Activated CD4-positive, alpha-beta T cell treated with anti-CD3 and anti-CD28 coated beads for 36 hours (primary cell): ENCODE measurements at regions of chr9 and their contacts with region 1.

Region 1: GRCh38 chr9:75200892-75201470 is 112.7 kb downstream of the OSTF1 start:
- DNase-seq: no peak
- ATAC-seq: no peak
- H3K4me3 Mint-ChIP-seq: no peak overlapping the region
- H3K27ac Mint-ChIP-seq: no peak overlapping the region
- H3K4me1 Mint-ChIP-seq: peaks cover 5% of the 10 kb centered on the region
- H3K27me3 Mint-ChIP-seq: no peaks in the 10 kb centered on the region

Region 2: GRCh38 chr9:75185585-75186170 is 15.3 kb before region 1 on chr9:
- CTCF ChIA-PET with region 1: interaction called, 20 read pairs
- POLR2A ChIA-PET with region 1: no interaction called
- intact Hi-C with region 1: no loop called
- DNase-seq: peak; percentile 79
- ATAC-seq: peak; percentile 72
- H3K4me3 Mint-ChIP-seq: no peak overlapping the region
- H3K27ac Mint-ChIP-seq: no peak overlapping the region
- H3K4me1 Mint-ChIP-seq: peaks cover 19% of the 10 kb centered on the region
- H3K27me3 Mint-ChIP-seq: no peaks in the 10 kb centered on the region

Region 3: DNA sequence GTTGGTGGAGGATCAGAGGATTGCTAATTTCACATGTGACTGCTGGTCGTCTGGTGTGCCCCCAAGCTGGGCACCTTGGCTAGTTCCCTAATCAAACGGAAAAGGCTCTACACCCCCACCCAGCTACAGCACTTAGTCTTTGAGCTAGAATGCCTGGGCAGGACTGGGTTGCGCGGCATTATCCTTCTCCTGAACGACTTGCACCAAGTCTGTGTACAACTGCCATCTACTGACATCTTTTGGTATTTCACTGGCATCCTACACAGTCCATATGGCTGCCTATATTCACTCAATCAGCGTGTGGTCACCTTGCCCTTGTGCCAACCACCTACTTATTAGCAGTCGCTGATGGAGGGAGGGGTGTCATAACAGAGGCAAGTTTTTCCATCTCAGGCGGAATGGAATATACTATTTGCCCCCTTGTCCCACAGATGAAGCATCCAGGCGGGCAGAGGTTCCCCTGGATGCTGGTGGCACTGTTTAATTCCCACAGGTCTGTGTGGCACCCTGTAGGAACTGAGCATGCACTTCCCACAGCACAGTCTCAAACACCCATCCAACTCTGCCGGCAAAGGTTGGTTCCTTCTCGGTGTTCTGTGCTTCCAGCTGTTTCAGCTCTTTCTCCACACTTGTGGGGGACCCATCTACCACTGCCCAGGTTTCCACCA is 37.5 kb after region 1 on chr9:
- CTCF ChIA-PET with region 1: interaction called, 35 read pairs
- POLR2A ChIA-PET with region 1: no interaction called
- intact Hi-C with region 1: loop called (anchors 1 kb)
- DNase-seq: peak; percentile 63
- ATAC-seq: peak; percentile 99
- H3K4me3 Mint-ChIP-seq: no peak overlapping the region
- H3K27ac Mint-ChIP-seq: no peak overlapping the region
- H3K4me1 Mint-ChIP-seq: no peaks in the 10 kb centered on the region
- H3K27me3 Mint-ChIP-seq: no peaks in the 10 kb centered on the region

Region 4: DNA sequence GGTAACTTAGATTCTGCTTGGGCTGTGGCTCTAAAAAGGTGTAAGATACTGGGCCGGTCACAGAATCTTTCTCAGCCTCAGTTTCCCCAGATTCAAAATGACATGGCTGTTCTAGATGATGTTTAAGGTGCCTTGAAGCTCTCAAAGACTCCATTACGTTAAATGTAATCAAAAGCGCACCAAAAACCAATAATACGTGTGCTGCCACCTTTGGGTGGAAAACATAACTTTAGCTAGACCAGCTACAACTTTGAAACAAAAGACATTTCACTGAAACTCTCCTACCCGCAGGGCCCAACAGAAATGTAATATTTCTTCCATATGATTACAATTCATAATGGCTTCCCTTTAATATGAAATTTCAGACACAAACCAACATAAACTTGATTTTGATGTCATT is 654.5 kb after region 1 on chr9:
- CTCF ChIA-PET with region 1: interaction called, 3 read pairs
- POLR2A ChIA-PET with region 1: no interaction called
- intact Hi-C with region 1: loop called in 1 of 2 experiments (anchors 10 kb)
- DNase-seq: peak; percentile 15
- ATAC-seq: no peak
- H3K4me3 Mint-ChIP-seq: no peak overlapping the region
- H3K27ac Mint-ChIP-seq: no peak overlapping the region
- H3K4me1 Mint-ChIP-seq: peaks cover 3% of the 10 kb centered on the region
- H3K27me3 Mint-ChIP-seq: peaks cover 3% of the 10 kb centered on the region

Region 5: GRCh38 chr9:75866273-75866871 is 665.4 kb after region 1 on chr9:
- CTCF ChIA-PET with region 1: interaction called, 5 read pairs
- POLR2A ChIA-PET with region 1: no interaction called
- intact Hi-C with region 1: loop called in 1 of 2 experiments (anchors 2 kb)
- DNase-seq: peak; percentile 56
- ATAC-seq: no peak
- H3K4me3 Mint-ChIP-seq: no peak overlapping the region
- H3K27ac Mint-ChIP-seq: no peak overlapping the region
- H3K4me1 Mint-ChIP-seq: peaks cover 10% of the 10 kb centered on the region
- H3K27me3 Mint-ChIP-seq: no peaks in the 10 kb centered on the region